ENCODE measurements at regions of chr15 and their contacts with region 1.

Region 1: DNA sequence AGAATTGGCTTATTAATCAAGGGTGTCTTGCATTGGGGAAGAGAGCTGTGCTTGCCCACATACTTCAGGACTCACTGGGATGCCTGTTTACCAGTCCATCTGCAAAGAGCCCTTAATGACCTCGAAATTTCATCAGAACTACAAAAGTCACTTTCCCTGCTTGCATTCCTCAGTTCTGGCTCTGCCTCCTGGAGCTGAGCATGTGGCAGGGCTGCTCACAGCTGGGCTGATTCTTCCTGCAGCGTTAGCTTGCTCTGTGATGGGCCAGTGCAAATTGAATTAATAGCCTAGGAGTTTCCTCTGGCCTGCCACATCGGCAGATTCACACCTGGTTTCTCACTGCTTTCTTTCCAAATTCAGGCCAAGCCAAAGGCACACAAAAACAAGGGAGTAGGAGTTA is 108.9 kb downstream of the DUT start:
- DNase-seq: no peak
- H3K4me3 ChIP-seq: no peak overlapping the region
- H3K27ac ChIP-seq: peak overlapping the region; percentile 21 to 34
- H3K4me1 ChIP-seq: peaks cover 0 to 4% of the 10 kb centered on the region in 2 donors
- H3K27me3 ChIP-seq: no peaks in the 10 kb centered on the region
- CTCF ChIP-seq: no peak

Region 2: GRCh38 chr15:47624503-47624902 is 815.6 kb before region 1 on chr15:
- intact Hi-C with region 1: no loop called
- DNase-seq: no peak
- H3K4me3 ChIP-seq: no peak overlapping the region
- H3K27ac ChIP-seq: no peak overlapping the region
- H3K4me1 ChIP-seq: no peaks in the 10 kb centered on the region
- H3K27me3 ChIP-seq: no peaks in the 10 kb centered on the region
- CTCF ChIP-seq: no peak

Region 3: DNA sequence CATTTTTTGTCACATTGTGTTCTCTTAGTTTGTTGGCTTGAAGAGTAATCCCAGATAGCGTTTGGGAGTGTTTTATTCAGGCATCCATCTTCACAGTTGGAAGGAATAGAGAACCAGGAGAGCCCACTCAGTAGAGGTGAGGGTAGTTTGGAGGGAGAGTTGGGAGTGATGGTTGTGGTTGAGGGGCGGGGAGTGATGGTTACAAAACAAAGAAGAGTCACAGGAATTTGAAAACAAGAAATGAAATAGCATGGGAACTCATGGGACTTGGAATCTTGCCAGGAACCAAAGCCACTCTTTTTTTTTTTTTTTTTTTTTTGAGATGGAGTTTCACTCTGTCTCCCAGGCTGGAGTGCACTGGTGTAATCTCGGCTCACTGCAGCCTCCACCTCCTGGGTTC is 72.6 kb before region 1 on chr15:
- intact Hi-C with region 1: no loop called
- DNase-seq: no peak
- H3K4me3 ChIP-seq: no peak overlapping the region
- H3K27ac ChIP-seq: no peak overlapping the region
- H3K4me1 ChIP-seq: no peaks in the 10 kb centered on the region
- H3K27me3 ChIP-seq: no peaks in the 10 kb centered on the region
- CTCF ChIP-seq: no peak

Region 4: DNA sequence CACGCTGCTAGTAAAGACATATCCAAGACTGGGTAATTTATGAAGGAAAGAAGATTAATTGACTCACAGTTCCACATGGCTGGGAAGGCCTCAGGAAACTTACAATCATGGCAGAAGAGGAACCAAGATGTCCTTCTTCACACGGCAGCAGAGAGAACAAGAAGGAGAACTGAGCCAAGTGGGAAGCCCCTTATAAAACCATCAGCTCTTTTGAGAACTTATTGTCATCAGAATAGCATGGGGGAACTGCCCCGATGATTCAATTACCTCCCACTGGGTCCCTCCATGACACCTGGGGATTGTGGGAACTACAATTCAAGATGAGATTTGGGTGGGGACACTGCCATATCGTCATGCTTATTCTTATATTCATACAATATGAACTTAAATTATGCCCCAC is 59.9 kb before region 1 on chr15:
- intact Hi-C with region 1: loop called (anchors 2 kb)
- DNase-seq: no peak
- H3K4me3 ChIP-seq: no peak overlapping the region
- H3K27ac ChIP-seq: no peak overlapping the region
- H3K4me1 ChIP-seq: peaks cover 0 to 5% of the 10 kb centered on the region in 2 donors
- H3K27me3 ChIP-seq: no peaks in the 10 kb centered on the region
- CTCF ChIP-seq: no peak